ENCODE measurements at regions of chr22 and their contacts with region 1.

Region 1: GRCh38 chr22:50200461-50201190 is at the start of gene SELENOO:
- DNase-seq: peak; percentile 100
- CTCF ChIP-seq: no peak

Region 2: GRCh38 chr22:50012716-50013181 is 187.9 kb before region 1 on chr22 and contains the start of gene IL17REL:
- in situ Hi-C with region 1: no loop called
- DNase-seq: no peak
- CTCF ChIP-seq: no peak

Region 3: GRCh38 chr22:50148991-50149721 is 51.5 kb before region 1 on chr22:
- in situ Hi-C with region 1: loop called (anchors 10 kb)
- DNase-seq: peak; percentile 95
- CTCF ChIP-seq: peak; percentile 93

Measured in GM13977 (cell line).